Lower leg skin (tissue), 4 donors: ENCODE measurements at regions of chr10 and their contacts with region 1.

Region 1: GRCh38 chr10:70367195-70367796 is 15.1 kb downstream of the LRRC20 start:
- DNase-seq: no peak
- H3K4me3 ChIP-seq: no peak overlapping the region
- CTCF ChIP-seq: no peak
- POLR2A ChIP-seq: no peak

Region 2: DNA sequence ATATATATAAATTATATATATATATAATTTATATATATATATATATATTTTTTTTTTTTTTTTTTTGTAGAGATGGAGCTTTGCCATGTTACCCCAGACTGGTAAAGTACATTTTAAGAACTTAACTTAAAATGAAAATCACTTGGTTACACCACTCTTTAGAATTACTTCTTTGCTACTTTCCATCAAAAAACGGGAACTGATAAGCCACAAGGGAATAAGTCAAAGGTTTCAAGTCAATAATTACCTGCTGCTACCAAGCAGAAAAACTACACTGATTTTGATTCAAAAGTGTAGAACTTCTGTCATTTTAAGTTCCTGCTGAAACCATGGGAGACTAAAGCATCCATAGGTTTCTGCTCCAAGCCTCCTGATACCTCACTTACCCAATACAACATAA is 146.3 kb before region 1 on chr10:
- intact Hi-C with region 1: loop called (anchors 5 kb)
- DNase-seq: no peak
- H3K4me3 ChIP-seq: no peak overlapping the region
- CTCF ChIP-seq: no peak
- POLR2A ChIP-seq: no peak

Region 3: DNA sequence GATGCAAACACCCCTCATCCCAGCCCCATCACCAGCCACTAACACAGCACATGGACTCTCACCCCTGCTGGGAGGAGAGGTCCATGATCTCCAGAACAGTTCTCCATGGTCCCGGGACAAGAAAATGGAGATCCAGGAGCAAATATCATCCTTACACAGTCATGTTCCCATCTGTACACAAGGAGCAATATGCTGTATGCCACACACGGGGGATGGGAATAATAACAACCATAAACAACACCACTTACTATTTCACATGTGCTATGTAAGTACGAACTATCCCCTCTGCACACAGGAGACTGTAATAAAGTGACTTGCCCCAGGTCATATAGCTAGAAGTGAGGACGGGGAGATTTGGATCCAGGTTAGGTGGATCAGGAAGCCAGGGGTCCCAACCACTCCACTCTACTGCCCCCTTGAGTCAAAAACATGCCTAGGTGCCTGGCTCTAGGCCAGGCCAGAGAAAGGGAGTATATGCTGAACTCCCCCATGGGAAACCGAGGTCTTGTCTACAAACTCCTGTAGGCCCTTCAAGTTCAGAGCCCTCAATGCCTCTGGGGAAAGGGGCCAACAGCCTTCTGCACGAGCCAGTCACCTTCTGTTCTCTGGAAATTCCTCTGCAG is 19.0 kb before region 1 on chr10:
- intact Hi-C with region 1: no loop called
- DNase-seq: no peak
- H3K4me3 ChIP-seq: no peak overlapping the region
- CTCF ChIP-seq: no peak
- POLR2A ChIP-seq: no peak